ENCODE measurements at regions of chr1 and their contacts with region 1.

Region 1: GRCh38 chr1:23743287-23744052 is at the start of gene ELOA:
- DNase-seq: peak; percentile 36 to 59
- ATAC-seq: peak; percentile 87 to 89
- H3K4me3 ChIP-seq: peak within 1 kb of the TSS; percentile 85 to 97 (median 94)
- H3K27ac ChIP-seq: peak within 1 kb of the TSS; percentile 84 to 95 (median 92)
- H3K4me1 ChIP-seq: peaks cover 34 to 35% of the 10 kb centered on the region in 2 donors
- H3K27me3 ChIP-seq: no peaks in the 10 kb centered on the region
- CTCF ChIP-seq: no peak
- POLR2A ChIP-seq: peak; percentile 53 to 70
- total RNA-seq, gene ELOA: 44.7 to 73.0 (median 59.0) TPM

Region 2: DNA sequence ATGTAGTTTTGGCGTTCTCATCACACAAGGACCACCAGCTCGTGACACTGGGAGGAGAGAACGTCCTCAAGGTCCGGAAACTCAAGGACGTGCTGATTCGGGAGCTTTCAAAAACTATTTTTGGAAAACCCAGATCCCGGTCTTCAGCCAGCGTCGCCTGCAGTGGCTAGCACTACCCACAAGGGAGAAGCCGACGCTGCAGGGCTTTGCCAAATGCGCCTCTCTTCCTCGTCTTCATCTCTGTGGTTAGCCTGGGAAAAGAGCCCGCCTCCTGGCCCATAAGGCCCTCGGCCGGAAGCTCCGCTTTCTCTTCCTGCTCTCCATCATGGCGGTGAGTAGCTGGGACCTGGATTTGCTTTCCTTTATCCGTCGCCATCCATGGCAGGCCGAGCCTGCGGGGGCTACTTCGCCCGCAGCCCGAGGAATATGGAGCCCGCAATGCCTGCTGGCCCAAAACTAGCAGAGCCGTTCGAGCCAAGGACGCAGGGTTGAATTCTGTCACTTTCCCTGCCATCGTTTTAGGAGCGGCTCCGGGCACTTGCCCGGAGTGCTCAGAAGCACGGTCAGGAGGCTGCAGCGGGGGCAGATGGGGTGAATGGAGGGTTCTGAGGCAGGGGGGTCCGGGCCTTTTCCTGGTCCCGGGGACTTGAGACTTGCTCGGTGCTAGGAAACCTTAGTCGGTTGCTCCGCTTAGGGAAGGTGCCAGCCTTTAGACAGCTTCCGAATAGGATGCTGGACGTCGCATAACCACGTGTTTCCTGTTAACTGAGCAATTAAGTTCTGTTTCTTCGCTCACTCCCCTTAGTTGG is 51.8 kb before region 1 on chr1 and contains the start of gene RPL11:
- in situ Hi-C with region 1: loop called in 1 of 4 experiments (anchors 5 kb)
- intact Hi-C with region 1: loop called (anchors 1 kb)
- DNase-seq: peak; percentile 94 to 96
- ATAC-seq: peak; percentile 99 to 100
- H3K4me3 ChIP-seq: peak within 1 kb of the TSS; percentile 85 to 99 (median 93)
- H3K27ac ChIP-seq: peak within 1 kb of the TSS; percentile 84 to 93 (median 91)
- H3K4me1 ChIP-seq: peaks cover 45 to 47% of the 10 kb centered on the region in 2 donors
- H3K27me3 ChIP-seq: no peaks in the 10 kb centered on the region
- CTCF ChIP-seq: peak; percentile 80 to 90 (median 90)
- POLR2A ChIP-seq: peak; percentile 83 to 94
- total RNA-seq, gene RPL11: 302 to 593 (median 504) TPM

Measured in gastrocnemius medialis (tissue), 4 donors.